ENCODE measurements at regions of chr12 and their contacts with region 1.

Region 1: DNA sequence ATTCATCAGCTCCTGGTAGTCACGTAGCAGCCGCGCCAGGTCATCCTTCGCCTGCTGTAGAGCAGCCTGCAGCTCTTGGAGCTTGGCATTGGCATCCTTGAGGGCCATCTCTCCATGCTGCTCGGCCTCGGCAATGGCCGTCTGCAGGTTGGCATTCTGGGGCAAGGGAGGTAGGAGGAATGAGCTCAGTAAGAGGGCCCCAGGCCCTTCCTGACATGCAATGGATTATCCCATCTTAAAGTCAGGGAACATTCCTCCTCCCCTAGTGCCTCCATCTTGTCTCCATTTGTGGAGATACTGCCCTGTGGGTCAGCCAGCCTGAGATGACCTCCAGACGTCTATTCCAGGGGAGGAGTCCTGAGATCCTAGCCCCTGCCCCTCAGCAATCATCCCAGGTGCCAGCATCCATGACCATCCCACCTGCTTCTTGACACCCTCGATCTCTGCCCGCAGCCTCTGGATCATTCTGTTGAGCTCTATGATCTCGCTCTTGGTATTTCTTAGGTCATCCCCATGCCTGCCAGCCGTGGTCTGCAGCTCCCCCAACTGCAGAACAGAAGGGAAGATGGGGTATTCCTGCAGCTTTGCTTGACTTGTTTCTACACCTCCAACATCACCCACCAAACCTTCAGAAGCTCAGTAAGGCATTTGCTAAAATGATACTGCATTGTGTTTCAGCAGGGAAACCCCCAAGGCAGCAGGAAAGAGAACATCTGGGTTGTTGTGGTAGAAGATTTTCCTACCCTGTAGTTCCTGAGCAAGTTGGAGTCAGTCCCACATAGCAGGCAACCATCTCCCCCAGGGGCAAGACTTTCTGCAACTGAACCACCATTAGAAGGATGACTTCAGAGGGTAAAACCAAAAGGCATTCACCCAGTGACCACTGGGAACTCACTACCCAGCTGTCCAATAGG is 4.4 kb downstream of the KRT3 start:
- DNase-seq: no peak
- H3K4me3 ChIP-seq: no peak overlapping the region
- H3K27ac ChIP-seq: no peak overlapping the region
- H3K4me1 ChIP-seq: peaks cover 13% of the 10 kb centered on the region
- H3K27me3 ChIP-seq: no peaks in the 10 kb centered on the region
- CTCF ChIP-seq: no peak
- POLR2A ChIP-seq: no peak

Region 2: DNA sequence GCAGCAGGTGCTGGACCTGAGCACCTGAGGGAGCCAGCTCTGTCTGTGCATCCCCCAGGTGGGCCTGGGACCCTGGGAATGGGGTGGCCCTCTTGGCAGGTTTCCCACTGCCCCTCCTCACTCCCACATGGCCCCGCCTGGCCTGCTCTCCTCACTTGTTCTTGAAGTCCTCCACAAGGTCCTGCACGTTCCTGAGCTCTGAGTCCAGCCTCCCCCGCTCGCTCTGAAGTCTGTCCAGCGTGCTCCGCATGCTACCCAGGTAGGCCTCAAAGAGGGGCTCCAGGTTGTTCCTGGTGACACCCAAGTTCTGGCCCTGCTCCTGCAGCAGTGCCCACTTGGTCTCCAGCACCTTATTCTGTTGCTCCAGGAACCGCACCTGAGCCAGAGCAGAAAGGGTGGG is 39.7 kb after region 1 on chr12:
- intact Hi-C with region 1: loop called (anchors 1 kb)
- DNase-seq: no peak
- H3K4me3 ChIP-seq: no peak overlapping the region
- H3K27ac ChIP-seq: no peak overlapping the region
- H3K4me1 ChIP-seq: no peaks in the 10 kb centered on the region
- H3K27me3 ChIP-seq: no peaks in the 10 kb centered on the region
- CTCF ChIP-seq: no peak
- POLR2A ChIP-seq: no peak

Region 3: DNA sequence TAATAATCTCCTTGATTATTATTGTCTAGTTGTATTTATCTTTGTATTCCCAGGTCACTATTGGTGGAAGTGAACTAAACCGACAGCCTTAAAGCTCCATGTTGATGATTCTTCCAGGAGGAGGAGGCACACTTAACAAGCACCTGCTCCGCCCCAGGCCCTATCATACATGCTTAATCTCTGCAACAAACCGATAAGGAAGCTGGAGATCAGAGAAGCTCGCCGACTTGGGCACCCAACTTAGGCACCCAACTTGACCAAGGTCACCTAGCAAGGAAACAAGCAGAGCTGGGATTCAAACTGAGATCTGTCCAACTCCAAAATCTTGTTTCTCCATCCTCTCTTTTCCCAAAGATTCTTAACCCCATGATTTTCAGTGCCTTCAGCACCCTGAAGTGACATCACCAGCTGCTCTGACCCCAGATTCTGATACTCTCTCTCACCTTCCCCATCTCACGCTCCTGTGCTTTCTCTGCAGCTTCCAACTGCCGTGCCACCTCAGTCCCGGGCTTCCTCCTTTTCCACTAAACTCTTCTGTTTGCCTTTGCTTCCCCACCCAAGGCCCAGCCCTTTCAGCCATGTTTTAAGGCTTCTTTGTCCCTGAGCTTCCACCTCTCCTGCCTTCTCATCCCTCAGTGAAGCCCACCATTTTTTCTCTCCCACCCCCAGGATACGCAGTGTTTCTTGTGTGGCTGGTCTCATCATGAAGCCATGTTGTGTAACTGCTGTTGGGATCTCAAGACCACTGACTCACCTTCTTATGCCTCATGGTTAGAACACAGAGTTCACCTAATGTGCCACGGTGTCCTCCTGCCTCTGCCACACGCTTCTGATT is 150.8 kb after region 1 on chr12:
- intact Hi-C with region 1: no loop called
- DNase-seq: no peak
- H3K4me3 ChIP-seq: no peak overlapping the region
- H3K27ac ChIP-seq: no peak overlapping the region
- H3K4me1 ChIP-seq: no peaks in the 10 kb centered on the region
- H3K27me3 ChIP-seq: no peaks in the 10 kb centered on the region
- CTCF ChIP-seq: no peak
- POLR2A ChIP-seq: no peak